Panc1 (cell line): ENCODE measurements at regions of chr2 and their contacts with region 1.

Region 1: GRCh38 chr2:97806738-97807618 is 93.6 kb downstream of the ZAP70 start:
- DNase-seq: peak; percentile 43
- ATAC-seq: peak; percentile 99
- H3K4me3 ChIP-seq: no peak overlapping the region
- H3K27ac ChIP-seq: no peak overlapping the region
- H3K4me1 ChIP-seq: no peaks in the 10 kb centered on the region
- H3K27me3 ChIP-seq: no peaks in the 10 kb centered on the region
- CTCF ChIP-seq: peak; percentile 96

Region 2: DNA sequence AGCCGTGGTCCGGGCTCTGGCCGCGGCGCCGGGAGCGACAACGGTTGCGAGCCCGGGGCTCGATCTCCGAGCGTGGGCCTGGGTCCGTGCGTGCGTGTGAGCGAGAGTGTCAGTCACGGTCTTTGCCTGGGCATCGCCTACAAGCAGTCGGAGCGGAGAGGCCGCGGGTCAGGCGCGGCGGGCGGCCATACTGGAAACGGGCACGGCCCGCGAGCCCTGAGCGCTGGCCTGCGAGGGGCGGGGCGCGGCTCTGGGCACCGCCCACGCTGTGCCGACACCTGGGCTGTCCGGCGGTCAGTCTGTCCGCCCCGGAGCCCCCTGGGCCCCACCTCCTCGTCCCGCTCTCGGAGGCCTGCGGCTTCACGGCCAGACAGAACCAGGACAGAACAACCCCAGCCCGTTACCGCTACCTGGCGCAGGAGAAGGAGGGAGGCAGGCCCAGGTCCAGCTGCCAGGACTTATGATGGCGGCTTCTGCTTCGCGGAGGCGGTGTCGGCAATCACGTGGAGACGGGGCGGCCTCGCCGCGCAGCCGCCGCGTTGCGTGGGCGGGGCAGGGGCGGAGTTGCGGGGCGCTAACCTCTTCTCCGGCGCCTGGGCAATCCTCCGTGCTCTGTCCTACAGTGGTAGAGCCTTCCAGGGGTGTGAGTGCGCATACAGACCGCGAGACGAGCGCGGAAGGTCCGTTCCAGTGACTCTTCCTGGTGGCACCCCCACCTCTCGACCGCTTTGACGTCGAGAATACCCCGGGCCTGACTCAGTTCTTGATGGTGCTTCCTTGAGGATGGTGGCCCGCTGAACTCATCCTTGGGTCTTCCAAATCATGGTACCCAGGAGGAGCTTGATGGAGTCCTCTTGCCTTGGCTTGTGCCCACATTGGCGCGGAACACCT is 189.0 kb after region 1 on chr2 and contains the start of gene TMEM131:
- CTCF ChIA-PET with region 1: no interaction called
- POLR2A ChIA-PET with region 1: no interaction called
- in situ Hi-C with region 1: no loop called
- intact Hi-C with region 1: loop called (anchors 5 kb)
- DNase-seq: peak; percentile 69
- ATAC-seq: peak; percentile 96
- H3K4me3 ChIP-seq: peak within 1 kb of the TSS; percentile 81 to 96
- H3K27ac ChIP-seq: peak within 1 kb of the TSS; percentile 92
- H3K4me1 ChIP-seq: peaks cover 26% of the 10 kb centered on the region
- H3K27me3 ChIP-seq: no peaks in the 10 kb centered on the region
- CTCF ChIP-seq: no peak
- total RNA-seq, gene TMEM131: 43.4 TPM

Region 3: DNA sequence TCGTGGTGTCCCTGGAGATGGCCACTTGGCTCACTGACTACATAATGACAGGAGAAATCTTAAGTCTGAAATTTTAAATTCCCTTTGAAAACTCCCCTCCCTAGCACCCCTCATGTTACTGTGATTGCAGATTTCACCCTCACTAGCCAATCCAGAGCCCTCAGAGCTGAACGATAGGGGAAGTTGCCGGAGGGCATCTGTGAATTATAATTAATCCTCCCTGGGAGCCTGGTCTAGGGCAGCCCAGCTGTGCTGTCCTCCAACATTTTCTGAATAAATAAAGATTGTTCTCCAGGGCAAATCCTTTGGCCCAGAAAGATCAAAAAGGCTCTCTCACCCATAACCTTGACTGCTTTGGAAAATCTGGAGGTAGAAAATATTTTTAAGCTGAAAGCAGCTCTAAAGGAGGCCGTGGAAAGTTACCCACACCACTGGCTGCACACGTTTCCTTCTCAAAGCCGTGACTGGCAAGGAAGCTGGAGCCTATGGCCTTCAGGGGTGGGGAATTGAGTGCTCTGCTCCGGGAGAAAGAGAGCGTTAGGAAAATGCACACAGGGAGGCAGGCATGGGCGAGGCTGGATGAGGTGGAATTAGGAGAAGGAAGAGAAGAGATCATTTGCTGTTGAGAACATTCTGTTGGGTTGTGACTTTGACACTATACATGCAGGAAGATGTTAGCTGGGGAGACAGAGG is 470.3 kb after region 1 on chr2:
- CTCF ChIA-PET with region 1: no interaction called
- POLR2A ChIA-PET with region 1: no interaction called
- in situ Hi-C with region 1: no loop called
- intact Hi-C with region 1: loop called (anchors 5 kb)
- DNase-seq: no peak
- ATAC-seq: no peak
- H3K4me3 ChIP-seq: no peak overlapping the region
- H3K27ac ChIP-seq: no peak overlapping the region
- H3K4me1 ChIP-seq: no peaks in the 10 kb centered on the region
- H3K27me3 ChIP-seq: peaks cover 6% of the 10 kb centered on the region
- CTCF ChIP-seq: no peak